IMR-90 (cell line): ENCODE measurements at regions of chr7 and their contacts with region 1.

Region 1: DNA sequence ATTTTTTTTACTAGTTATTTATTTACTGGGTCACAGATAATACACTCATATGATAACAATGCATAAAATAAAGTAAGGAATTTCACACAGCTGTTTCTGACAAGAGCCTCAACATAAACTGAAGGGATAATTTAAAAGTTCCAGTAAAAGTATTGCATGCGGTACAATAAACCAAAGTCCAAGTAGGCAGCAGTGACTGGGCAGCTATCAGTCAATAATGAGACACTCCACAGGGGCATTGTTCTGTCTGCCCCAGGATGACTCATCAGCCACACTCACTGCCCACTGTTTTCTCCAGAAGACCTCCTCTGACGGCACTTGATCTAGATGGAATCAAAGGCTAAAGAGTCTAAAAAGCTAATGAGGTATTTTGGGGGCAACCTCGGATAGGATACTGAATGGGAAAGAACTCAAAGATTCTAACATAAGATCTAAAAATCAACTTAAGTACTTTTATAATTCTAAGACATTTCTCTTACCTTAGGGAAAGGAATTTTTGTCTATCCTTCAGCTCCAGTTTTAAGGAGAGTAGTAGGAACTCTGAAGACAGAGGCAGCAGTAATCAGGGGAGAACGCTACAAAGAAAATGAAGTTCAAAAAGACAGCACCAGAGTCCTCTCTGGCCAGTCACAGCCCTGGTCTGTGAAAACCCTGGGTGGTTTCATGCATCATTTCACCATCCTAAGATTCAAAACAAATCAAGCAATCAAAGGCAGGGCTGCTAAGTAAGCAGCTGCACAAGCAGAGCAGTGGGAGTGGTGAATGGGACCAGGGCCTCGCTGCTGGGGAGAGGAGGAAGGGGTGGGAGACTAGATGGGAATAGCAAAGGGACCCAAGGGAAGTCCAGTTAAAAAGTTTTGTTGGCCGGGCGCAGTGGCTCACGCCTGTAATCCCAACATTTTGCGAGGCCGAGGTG is 175.1 kb downstream of the AVL9 start:
- DNase-seq: peak; percentile 45
- ATAC-seq: peak; percentile 21
- H3K4me3 ChIP-seq: no peak overlapping the region
- H3K27ac ChIP-seq: no peak overlapping the region
- H3K4me1 ChIP-seq: peaks cover 9% of the 10 kb centered on the region
- H3K27me3 ChIP-seq: no peaks in the 10 kb centered on the region
- CTCF ChIP-seq: no peak
- POLR2A ChIP-seq: no peak
- RAD21 ChIP-seq: no peak

Region 2: DNA sequence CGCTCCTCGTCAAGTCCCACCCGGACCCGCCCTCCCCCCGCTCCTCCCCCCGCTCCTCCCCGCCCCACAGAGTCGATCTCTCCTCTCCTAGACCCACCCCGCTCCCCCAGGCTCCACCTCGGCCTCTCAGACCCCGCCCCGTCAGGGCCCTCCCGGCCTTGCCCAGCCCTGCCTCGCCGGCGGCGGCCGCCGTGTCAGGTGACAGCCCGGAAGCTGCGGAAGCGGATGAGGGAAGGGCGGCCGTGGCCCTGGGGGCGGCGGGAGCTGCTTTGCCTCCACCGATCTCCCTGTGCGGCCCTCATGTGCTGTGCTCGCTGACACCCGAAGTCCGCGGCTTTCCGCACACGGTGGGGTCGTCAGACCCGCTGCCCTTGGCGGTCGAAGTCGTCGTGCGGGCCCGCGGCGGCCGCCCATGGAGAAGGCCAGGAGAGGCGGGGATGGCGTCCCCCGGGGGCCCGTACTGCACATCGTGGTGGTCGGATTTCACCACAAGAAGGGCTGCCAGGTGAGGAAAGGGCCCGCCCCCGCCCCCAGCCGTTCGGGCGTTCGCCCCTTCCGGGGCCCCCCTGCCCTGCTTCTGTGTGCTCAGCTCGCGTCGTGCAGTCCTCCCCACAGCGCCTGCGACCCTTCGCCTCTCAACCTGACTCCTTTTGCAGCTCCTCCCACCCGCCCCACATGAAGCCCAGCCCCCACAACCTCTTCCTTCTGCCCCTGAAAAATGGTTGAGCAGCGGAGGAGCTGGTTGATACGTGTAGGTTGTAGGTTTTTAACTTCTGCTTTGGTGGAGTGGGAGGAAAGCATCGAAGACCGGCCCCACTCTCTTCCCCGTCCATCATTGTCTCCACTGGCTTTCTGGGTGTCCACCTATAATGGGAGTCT is 174.8 kb before region 1 on chr7 and contains the start of gene AVL9:
- CTCF ChIA-PET with region 1: no interaction called
- POLR2A ChIA-PET with region 1: no interaction called
- dilution Hi-C with region 1: no loop called
- in situ Hi-C with region 1: no loop called
- intact Hi-C with region 1: loop called (anchors 5 kb)
- DNase-seq: peak; percentile 93
- ATAC-seq: peak; percentile 97
- H3K4me3 ChIP-seq: peak within 1 kb of the TSS; percentile 97
- H3K27ac ChIP-seq: peak within 1 kb of the TSS; percentile 98
- H3K4me1 ChIP-seq: peaks cover 2% of the 10 kb centered on the region; the same call in 1 of the 2 replicates
- H3K27me3 ChIP-seq: no peaks in the 10 kb centered on the region
- CTCF ChIP-seq: no peak
- POLR2A ChIP-seq: peak; percentile 90
- RAD21 ChIP-seq: no peak
- total RNA-seq, gene AVL9: 21.7 and 23.6 TPM in 2 replicates

Region 3: GRCh38 chr7:32588657-32589056 is 81.7 kb before region 1 on chr7:
- CTCF ChIA-PET with region 1: no interaction called
- POLR2A ChIA-PET with region 1: no interaction called
- dilution Hi-C with region 1: no loop called
- in situ Hi-C with region 1: no loop called
- intact Hi-C with region 1: loop called (anchors 5 kb)
- DNase-seq: peak; percentile 73
- ATAC-seq: peak; percentile 45; the same call in 1 of the 2 replicates
- H3K4me3 ChIP-seq: no peak overlapping the region
- H3K27ac ChIP-seq: peak overlapping the region; percentile 0; the same call in 1 of the 2 replicates
- H3K4me1 ChIP-seq: peaks cover 17% of the 10 kb centered on the region
- H3K27me3 ChIP-seq: no peaks in the 10 kb centered on the region
- CTCF ChIP-seq: no peak
- POLR2A ChIP-seq: no peak
- RAD21 ChIP-seq: no peak